Gastrocnemius medialis (tissue), 4 donors: ENCODE measurements at regions of chr7 and their contacts with region 1.

Region 1: DNA sequence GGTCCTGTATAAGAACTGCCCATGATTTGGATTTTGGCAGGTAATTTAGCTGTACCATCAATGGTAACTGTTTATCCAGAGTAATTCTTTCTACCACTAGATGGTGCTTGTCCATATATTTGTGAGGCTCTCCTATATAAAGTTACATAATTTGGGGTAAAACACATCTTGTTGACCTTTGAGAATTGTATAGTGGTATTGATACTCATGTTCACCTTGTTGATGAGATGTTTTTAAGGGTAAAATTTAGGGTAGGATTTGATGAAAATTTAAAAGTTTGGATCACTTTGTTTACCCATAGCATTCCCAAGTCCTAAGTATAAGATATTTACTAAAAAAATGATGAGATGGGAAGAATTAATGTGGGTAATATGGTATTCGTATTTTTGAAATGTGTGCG is 31.6 kb downstream of the ST7 start:
- DNase-seq: no peak
- ATAC-seq: no peak
- H3K4me3 ChIP-seq: no peak overlapping the region
- H3K27ac ChIP-seq: no peak overlapping the region
- H3K4me1 ChIP-seq: peaks cover 3 to 6% of the 10 kb centered on the region in 2 donors
- H3K27me3 ChIP-seq: no peaks in the 10 kb centered on the region
- CTCF ChIP-seq: peak; percentile 48 to 69 (median 60)
- POLR2A ChIP-seq: no peak

Region 2: DNA sequence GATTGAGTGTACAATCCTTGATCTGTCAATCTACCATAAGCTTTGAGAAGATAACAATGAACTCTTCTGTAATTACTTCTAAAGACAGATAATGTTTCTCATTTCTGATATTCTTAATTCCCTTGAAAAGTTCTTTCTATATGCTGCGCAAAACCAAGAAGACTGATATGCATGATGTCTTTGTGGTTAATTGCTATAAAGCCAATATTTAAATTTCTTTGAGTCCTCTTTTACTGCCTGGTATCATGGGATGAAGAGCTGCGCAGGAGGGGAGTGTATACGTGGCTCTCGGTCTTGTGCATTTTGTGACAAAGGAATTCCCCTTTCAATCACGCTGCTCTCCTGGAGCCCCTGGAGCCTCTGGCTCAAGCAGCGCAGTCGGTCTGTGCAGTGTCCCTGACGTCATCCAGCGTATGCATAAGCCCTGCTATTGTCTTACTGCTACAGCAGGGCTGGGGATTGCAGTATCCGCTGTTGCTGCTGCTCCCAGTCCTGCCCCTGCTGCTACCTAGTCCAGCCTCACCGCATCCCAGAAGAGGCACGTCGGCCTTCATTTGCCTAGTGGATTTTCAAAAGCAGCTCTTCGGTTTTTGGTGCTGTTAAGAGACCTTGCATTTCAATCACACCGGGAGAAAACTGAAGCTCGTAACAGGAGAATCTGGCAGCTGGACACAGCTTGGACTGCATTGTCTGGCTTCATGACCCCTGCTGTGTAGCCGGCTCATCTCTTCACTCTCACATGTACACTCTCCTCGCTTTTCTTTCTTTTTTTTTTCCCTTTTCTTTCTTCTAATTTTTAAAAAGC is 35.1 kb after region 1 on chr7:
- in situ Hi-C with region 1: no loop called
- intact Hi-C with region 1: no loop called
- DNase-seq: peak; percentile 15 to 53
- ATAC-seq: peak; percentile 86 to 88
- H3K4me3 ChIP-seq: peak overlapping the region; percentile 40 to 47 (median 44)
- H3K27ac ChIP-seq: peak overlapping the region; percentile 63 to 70 (median 66)
- H3K4me1 ChIP-seq: peaks cover 58 to 84% of the 10 kb centered on the region in 2 donors
- H3K27me3 ChIP-seq: no peaks in the 10 kb centered on the region
- CTCF ChIP-seq: no peak
- POLR2A ChIP-seq: no peak

Region 3: GRCh38 chr7:117110480-117111337 is 125.8 kb after region 1 on chr7:
- in situ Hi-C with region 1: loop called in 2 of 4 experiments (anchors 5 to 10 kb)
- intact Hi-C with region 1: no loop called
- DNase-seq: peak in 1 of 2 donors; percentile 24
- ATAC-seq: peak; percentile 71 to 83
- H3K4me3 ChIP-seq: no peak overlapping the region
- H3K27ac ChIP-seq: peak overlapping the region; percentile 4 to 65 (median 51)
- H3K4me1 ChIP-seq: peaks cover 37 to 41% of the 10 kb centered on the region in 2 donors
- H3K27me3 ChIP-seq: no peaks in the 10 kb centered on the region
- CTCF ChIP-seq: no peak
- POLR2A ChIP-seq: no peak

Region 4: DNA sequence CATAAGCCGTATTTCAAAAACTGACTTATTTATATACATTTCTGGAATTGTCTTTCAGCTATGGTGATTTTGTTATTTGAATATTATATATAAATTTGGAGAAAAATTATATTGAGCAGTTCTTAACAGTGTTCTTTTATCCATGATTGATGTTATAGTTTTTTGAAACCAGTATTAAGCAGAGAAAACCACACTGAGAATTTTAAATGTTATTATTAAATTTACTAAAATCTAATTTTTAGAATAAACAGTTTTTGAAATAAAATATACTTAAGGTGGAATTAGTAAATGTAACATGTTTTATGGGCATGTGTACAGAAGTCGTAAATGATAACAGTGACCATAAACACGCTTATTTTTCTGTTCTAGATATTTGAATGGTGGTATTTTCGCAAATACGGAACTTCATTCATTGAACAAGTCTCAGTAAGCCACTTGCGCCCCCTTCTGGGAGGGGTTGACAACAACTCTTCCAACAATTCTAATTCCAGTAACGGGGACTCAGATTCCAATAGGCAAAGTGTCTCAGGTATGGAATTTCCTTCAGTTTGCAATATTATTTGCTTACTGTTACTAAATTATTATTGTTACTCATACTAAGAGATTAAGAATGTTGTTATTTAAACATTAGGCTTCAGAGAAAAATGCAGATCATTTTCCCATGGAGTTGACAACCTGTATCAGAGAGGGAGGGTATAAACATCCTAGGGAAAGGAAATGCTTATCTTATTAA is 134.4 kb after region 1 on chr7:
- in situ Hi-C with region 1: loop called in 3 of 4 experiments (anchors 5 to 10 kb)
- intact Hi-C with region 1: loop called (anchors 1 kb)
- DNase-seq: peak; percentile 43 to 67
- ATAC-seq: peak in 1 of 2 donors; percentile 65
- H3K4me3 ChIP-seq: no peak overlapping the region
- H3K27ac ChIP-seq: no peak overlapping the region
- H3K4me1 ChIP-seq: peaks cover 8 to 23% of the 10 kb centered on the region in 2 donors
- H3K27me3 ChIP-seq: no peaks in the 10 kb centered on the region
- CTCF ChIP-seq: peak; percentile 75 to 90 (median 81)
- POLR2A ChIP-seq: no peak

Region 5: DNA sequence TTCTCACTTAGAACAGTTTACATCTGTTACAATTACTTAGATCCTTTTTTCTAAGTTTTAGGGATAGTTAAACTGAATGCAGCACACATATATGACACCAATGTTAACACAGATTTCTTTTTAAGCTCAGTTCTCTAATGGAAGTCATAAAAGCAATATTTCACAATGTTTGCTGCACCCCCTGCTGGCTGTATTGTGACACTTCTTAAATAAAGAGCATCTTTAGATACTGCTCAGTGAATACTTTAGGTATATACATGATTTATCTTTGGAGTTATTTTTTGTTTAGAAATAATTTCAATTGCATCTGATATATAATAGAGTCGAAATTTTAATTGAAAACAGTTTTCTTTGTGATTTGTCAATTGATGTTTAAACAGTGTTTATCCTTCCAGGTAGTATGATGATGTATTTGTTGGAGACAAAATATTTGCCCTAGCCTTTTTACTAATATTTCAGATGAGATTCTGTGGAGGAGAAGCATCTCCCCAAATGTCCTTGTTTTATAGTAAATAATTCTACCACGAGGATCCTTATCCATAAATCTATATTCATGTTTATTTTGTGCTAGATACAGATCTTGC is 142.8 kb after region 1 on chr7:
- in situ Hi-C with region 1: loop called in 2 of 4 experiments (anchors 5 kb)
- intact Hi-C with region 1: no loop called
- DNase-seq: peak in 1 of 2 donors; percentile 28
- ATAC-seq: peak in 1 of 2 donors; percentile 50
- H3K4me3 ChIP-seq: no peak overlapping the region
- H3K27ac ChIP-seq: no peak overlapping the region
- H3K4me1 ChIP-seq: peaks cover 26 to 39% of the 10 kb centered on the region in 2 donors
- H3K27me3 ChIP-seq: no peaks in the 10 kb centered on the region
- CTCF ChIP-seq: peak; percentile 45 to 89 (median 69)
- POLR2A ChIP-seq: no peak

Region 6: DNA sequence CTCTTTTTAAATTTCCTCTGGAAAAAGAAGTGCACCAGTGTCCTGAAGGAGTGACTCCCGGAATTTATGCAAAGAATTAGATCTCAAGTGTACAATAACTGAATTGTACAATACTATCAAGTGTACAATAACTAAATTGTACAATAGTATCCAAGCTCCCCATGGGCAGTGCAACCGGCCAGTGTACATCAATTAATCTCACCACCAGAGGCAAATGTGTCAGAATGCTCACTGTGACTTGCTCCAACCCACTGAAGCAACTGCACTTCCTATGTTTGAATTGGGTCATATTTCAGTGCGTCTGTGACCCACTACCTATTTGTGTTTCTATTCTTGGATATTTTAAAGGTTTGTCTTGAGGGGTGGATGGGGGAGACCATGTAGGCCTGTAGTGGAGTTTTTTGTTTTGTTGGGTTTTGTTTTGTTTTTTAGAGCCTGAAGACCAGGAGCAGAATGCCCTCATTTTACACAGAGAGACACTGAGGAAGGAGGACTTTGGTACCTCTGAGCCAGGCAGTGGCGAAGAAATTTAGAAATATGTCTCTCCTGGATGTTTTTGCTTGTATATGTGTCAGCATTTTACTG is 966.9 kb after region 1 on chr7:
- in situ Hi-C with region 1: no loop called
- intact Hi-C with region 1: no loop called
- DNase-seq: no peak
- ATAC-seq: no peak
- H3K4me3 ChIP-seq: no peak overlapping the region
- H3K27ac ChIP-seq: no peak overlapping the region
- H3K4me1 ChIP-seq: no peaks in the 10 kb centered on the region
- H3K27me3 ChIP-seq: no peaks in the 10 kb centered on the region
- CTCF ChIP-seq: no peak
- POLR2A ChIP-seq: no peak